ENCODE measurements at regions of chr10 and their contacts with region 1.

Region 1: GRCh38 chr10:66045859-66046258 is 880.0 kb upstream of the LRRTM3 start:
- DNase-seq: no peak
- H3K4me3 ChIP-seq: no peak overlapping the region
- H3K27ac ChIP-seq: no peak overlapping the region
- H3K4me1 ChIP-seq: no peaks in the 10 kb centered on the region
- H3K27me3 ChIP-seq: no peaks in the 10 kb centered on the region
- CTCF ChIP-seq: no peak

Region 2: DNA sequence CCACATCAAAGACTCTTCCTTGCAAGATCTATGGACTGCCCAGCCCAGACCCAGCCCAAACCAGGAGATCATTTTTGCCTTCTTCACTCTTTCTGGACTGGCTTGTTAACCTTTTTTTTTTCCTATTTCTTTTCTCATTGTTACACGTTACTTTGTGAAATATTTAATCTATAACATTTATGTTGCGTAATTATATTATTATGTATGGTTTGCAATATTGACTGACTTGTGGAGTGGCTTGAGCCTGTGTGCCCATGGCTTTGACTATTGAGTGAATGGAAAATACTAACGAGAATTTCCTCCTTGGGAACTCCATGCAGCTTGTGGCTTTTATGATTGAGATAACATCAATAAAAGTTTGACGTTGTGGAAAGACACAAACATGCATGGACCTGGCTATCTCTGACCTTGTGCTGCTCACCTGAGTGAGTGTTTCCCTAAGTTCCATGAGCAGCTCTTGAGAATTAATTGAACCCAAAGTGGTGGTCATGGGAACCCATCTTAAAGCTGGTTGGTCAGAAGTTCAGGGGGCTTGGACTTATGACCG is 761.3 kb before region 1 on chr10:
- CTCF ChIA-PET with region 1: no interaction called
- POLR2A ChIA-PET with region 1: no interaction called
- intact Hi-C with region 1: no loop called
- DNase-seq: no peak
- H3K4me3 ChIP-seq: no peak overlapping the region
- H3K27ac ChIP-seq: no peak overlapping the region
- H3K4me1 ChIP-seq: no peaks in the 10 kb centered on the region
- H3K27me3 ChIP-seq: no peaks in the 10 kb centered on the region
- CTCF ChIP-seq: no peak

Region 3: DNA sequence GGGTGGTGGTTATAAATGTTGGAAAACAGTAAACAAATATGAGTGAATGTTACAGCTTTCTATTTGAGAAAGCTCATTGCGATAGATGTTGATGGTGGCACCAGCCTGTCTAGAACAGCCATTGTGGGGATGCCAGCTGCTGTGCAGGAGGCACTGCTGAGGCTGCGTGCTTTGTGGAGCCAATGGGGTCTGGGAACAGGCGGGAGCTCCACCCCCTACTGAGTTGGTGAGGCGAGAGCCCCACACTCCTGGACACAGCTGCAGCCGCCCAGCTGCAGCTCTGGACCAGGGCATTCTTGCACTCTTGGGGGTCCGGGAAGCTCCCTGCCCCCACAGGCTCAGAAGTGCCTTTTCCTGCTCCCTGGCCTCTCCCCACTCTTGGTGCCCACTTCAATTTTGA is 267.1 kb before region 1 on chr10:
- CTCF ChIA-PET with region 1: no interaction called
- POLR2A ChIA-PET with region 1: no interaction called
- intact Hi-C with region 1: no loop called
- DNase-seq: no peak
- H3K4me3 ChIP-seq: no peak overlapping the region
- H3K27ac ChIP-seq: no peak overlapping the region
- H3K4me1 ChIP-seq: no peaks in the 10 kb centered on the region
- H3K27me3 ChIP-seq: no peaks in the 10 kb centered on the region
- CTCF ChIP-seq: no peak

Region 4: GRCh38 chr10:66025186-66025585 is 20.7 kb before region 1 on chr10:
- CTCF ChIA-PET with region 1: no interaction called
- POLR2A ChIA-PET with region 1: no interaction called
- intact Hi-C with region 1: loop called (anchors 2 kb)
- DNase-seq: no peak
- H3K4me3 ChIP-seq: no peak overlapping the region
- H3K27ac ChIP-seq: no peak overlapping the region
- H3K4me1 ChIP-seq: no peaks in the 10 kb centered on the region
- H3K27me3 ChIP-seq: no peaks in the 10 kb centered on the region
- CTCF ChIP-seq: no peak

Measured in PC-9 (cell line).